CD4-positive, alpha-beta T cell (primary cell): ENCODE measurements at regions of chr12 and their contacts with region 1.

Region 1: GRCh38 chr12:52327052-52327829 is 6.0 kb upstream of the KRT83 start:
- DNase-seq: peak; percentile 62 to 91 (median 74)
- ATAC-seq: peak; percentile 99
- H3K4me3 ChIP-seq: no peak overlapping the region
- H3K4me3 Mint-ChIP-seq: no peak overlapping the region
- H3K27ac ChIP-seq: no peak overlapping the region
- H3K27ac Mint-ChIP-seq: no peak overlapping the region
- H3K4me1 ChIP-seq: peaks cover 7% of the 10 kb centered on the region
- H3K4me1 Mint-ChIP-seq: peaks cover 7% of the 10 kb centered on the region
- H3K27me3 ChIP-seq: peaks cover 0 to 4% of the 10 kb centered on the region in 2 experiments
- H3K27me3 Mint-ChIP-seq: peaks cover 31% of the 10 kb centered on the region
- CTCF ChIP-seq: peak; percentile 94

Region 2: GRCh38 chr12:52139552-52140062 is 187.6 kb before region 1 on chr12:
- CTCF ChIA-PET with region 1: interaction called, 4 read pairs
- POLR2A ChIA-PET with region 1: no interaction called
- intact Hi-C with region 1: loop called in 1 of 2 experiments (anchors 1 kb)
- DNase-seq: peak in 11 of 14 experiments; percentile 9 to 64 (median 32)
- ATAC-seq: peak; percentile 98
- H3K4me3 ChIP-seq: no peak overlapping the region
- H3K4me3 Mint-ChIP-seq: no peak overlapping the region
- H3K27ac ChIP-seq: no peak overlapping the region
- H3K27ac Mint-ChIP-seq: no peak overlapping the region
- H3K4me1 ChIP-seq: no peaks in the 10 kb centered on the region
- H3K4me1 Mint-ChIP-seq: no peaks in the 10 kb centered on the region
- H3K27me3 ChIP-seq: peaks cover 0 to 5% of the 10 kb centered on the region in 2 experiments
- H3K27me3 Mint-ChIP-seq: peaks cover 5% of the 10 kb centered on the region
- CTCF ChIP-seq: peak; percentile 69

Region 3: DNA sequence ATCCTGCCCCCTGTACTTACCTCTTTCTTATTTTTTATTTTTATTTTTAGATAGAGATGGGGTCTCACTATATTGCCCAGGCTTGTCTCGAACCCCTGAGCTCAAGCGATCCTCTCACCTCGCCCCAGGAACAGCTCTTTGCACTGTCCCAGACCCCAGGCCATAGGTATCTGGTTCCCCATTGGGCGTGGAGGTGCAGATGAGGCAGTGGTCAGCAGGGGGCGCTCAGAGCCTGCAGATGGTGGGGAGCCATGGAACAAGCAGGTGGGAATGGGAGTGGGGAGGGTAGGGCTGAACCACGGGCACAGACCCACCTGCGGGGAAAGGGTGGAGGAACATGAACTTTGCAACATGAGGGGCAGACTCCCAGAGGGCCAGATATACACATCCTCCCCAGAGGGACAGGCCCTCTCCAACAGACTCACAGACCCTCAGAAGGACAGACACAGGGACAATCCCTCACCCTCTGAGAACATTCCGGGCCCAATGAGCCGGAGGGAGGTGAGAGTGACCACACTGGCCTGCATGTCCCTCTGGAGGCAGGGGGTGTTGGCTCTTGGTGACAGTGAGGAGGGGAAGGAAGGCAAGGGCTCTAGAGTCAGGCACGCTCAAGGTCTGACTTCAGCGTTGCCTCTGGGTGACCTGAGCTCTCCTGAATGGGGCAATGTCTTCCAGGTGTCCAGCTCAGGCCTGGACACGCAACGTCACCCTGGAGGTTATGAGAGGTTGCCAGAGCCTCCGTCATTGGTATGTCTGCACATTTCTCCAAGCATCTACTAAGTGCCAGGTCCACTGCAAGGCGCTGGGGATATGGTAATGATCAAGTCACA is 170.3 kb before region 1 on chr12:
- CTCF ChIA-PET with region 1: interaction called, 11 read pairs
- POLR2A ChIA-PET with region 1: interaction called, 5 read pairs
- intact Hi-C with region 1: loop called (anchors 1 kb)
- DNase-seq: peak; percentile 57 to 84 (median 70)
- ATAC-seq: peak; percentile 26
- H3K4me3 ChIP-seq: no peak overlapping the region
- H3K4me3 Mint-ChIP-seq: no peak overlapping the region
- H3K27ac ChIP-seq: no peak overlapping the region
- H3K27ac Mint-ChIP-seq: peak overlapping the region; percentile 1
- H3K4me1 ChIP-seq: peaks cover 65% of the 10 kb centered on the region
- H3K4me1 Mint-ChIP-seq: peaks cover 42% of the 10 kb centered on the region
- H3K27me3 ChIP-seq: no peaks in the 10 kb centered on the region
- H3K27me3 Mint-ChIP-seq: no peaks in the 10 kb centered on the region
- CTCF ChIP-seq: peak; percentile 90

Region 4: DNA sequence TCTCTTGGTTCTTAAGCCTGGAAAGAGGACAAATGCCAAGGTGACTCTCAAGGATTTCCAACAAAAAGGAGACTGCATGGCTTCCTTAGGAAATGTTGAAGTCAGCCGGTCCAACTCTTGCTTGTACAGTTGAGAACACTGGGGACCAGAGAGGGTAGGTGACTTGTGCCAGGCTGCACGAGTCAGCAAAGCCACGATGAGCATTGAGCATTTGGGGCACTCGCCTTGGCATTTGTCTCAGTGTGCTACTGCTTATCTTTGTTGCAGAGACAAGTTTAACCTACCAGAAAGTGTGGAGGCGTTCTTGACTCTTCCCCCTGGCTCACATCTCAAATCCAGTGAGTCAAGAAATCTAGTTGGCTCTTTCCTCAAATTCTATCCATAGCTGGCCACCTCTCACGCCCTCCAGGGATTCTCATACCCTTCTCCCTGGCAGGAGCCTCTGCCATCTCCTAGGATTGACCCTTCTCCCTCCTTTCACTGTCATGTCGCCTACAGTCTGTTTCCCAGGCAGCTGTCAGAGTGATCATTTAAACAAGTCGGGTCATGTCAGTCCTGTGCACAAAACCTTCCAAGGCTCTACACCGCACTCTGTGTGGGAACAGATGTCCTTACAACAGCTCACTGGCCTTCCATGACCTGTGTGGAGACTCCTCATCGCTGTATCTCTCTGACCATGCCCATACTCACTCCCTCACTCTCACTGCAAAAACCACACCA is 11.2 kb after region 1 on chr12:
- CTCF ChIA-PET with region 1: interaction called, 12 read pairs
- POLR2A ChIA-PET with region 1: interaction called, 3 read pairs
- intact Hi-C with region 1: no loop called
- DNase-seq: no peak
- ATAC-seq: no peak
- H3K4me3 ChIP-seq: no peak overlapping the region
- H3K4me3 Mint-ChIP-seq: no peak overlapping the region
- H3K27ac ChIP-seq: no peak overlapping the region
- H3K27ac Mint-ChIP-seq: no peak overlapping the region
- H3K4me1 ChIP-seq: no peaks in the 10 kb centered on the region
- H3K4me1 Mint-ChIP-seq: no peaks in the 10 kb centered on the region
- H3K27me3 ChIP-seq: peaks cover 0 to 6% of the 10 kb centered on the region in 2 experiments
- H3K27me3 Mint-ChIP-seq: peaks cover 11% of the 10 kb centered on the region
- CTCF ChIP-seq: no peak

Region 5: GRCh38 chr12:52351196-52352059 is 24.2 kb after region 1 on chr12:
- CTCF ChIA-PET with region 1: interaction called, 10 read pairs
- POLR2A ChIA-PET with region 1: no interaction called
- intact Hi-C with region 1: no loop called
- DNase-seq: peak; percentile 37 to 86 (median 60)
- ATAC-seq: peak; percentile 99
- H3K4me3 ChIP-seq: no peak overlapping the region
- H3K4me3 Mint-ChIP-seq: peak overlapping the region; percentile 36
- H3K27ac ChIP-seq: no peak overlapping the region
- H3K27ac Mint-ChIP-seq: peak overlapping the region; percentile 28
- H3K4me1 ChIP-seq: peaks cover 22% of the 10 kb centered on the region
- H3K4me1 Mint-ChIP-seq: peaks cover 25% of the 10 kb centered on the region
- H3K27me3 ChIP-seq: no peaks in the 10 kb centered on the region
- H3K27me3 Mint-ChIP-seq: no peaks in the 10 kb centered on the region
- CTCF ChIP-seq: no peak